ENCODE measurements at regions of chr16 and their contacts with region 1.

Region 1: GRCh38 chr16:88452482-88453216 is 431 bp upstream of the ZFPM1 start:
- DNase-seq: peak; percentile 99
- H3K4me3 Mint-ChIP-seq: peak overlapping the region; percentile 80
- H3K27ac Mint-ChIP-seq: peak overlapping the region; percentile 84
- H3K4me1 Mint-ChIP-seq: peaks cover 25% of the 10 kb centered on the region
- H3K27me3 Mint-ChIP-seq: no peaks in the 10 kb centered on the region

Region 2: DNA sequence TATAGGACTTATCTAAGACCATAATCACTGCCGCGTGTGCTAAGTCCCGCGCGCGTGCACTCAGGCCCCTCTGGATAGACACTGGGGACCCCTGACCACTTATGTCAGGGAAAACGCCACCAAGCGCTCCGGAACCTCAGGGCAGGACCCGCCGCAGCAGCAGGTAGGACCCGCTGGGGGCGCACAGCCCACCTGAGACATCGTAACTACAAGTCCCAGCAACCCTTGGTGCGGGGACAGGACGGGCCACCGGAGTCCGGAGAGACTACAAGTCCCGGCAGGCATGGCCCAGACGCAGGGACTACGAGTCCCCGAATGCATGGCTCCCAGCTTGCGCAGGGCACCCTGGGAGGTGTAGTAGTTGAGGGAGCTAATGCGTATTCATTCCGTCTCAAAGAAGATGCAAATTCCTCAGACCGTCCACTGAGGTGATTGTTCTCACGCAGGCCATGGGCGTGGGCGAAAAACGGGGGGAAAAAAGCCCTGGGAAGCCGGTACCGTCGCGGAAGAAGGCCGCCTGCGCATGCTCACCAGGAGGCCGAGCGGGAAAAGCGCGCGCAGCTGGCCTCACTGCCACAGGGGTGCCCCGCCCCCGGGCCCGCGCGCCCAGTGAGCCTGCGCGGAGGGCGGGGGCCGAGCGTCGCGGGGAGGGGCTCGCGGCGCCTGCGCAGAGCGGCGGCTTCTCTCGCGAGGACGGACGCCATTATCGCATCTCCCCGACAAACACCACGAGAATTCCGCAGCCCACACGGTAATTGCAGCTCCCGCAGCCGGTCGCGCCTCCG is 501.7 kb before region 1 on chr16 and contains the start of gene BANP:
- CTCF ChIA-PET with region 1: no interaction called
- POLR2A ChIA-PET with region 1: no interaction called
- intact Hi-C with region 1: loop called (anchors 5 kb)
- DNase-seq: peak; percentile 98
- H3K4me3 Mint-ChIP-seq: peak within 1 kb of the TSS; percentile 96
- H3K27ac Mint-ChIP-seq: peak within 1 kb of the TSS; percentile 100
- H3K4me1 Mint-ChIP-seq: peaks cover 43% of the 10 kb centered on the region
- H3K27me3 Mint-ChIP-seq: peaks cover 2% of the 10 kb centered on the region
- total RNA-seq, gene BANP: 29.6 to 30.6 TPM

Region 3: DNA sequence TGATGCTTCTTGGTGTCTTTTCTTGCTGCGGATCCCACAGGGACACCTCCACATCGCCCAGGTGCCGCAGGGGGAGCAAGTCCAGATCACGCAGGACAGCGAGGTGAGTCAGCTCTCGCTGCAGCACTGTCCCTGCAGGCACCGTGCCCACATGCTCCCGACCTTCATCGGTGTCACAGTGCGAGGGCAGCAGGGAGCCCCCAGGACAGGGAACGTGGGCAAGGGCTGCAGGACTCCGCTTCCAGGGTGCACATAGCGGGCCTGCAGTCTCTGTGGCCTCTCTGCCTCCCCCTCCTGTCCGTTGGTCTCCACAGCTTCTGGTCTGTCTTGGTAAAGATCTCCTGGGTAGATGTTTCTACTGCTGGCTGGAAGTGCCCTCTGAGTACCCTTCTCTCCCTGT is 417.4 kb before region 1 on chr16:
- CTCF ChIA-PET with region 1: no interaction called
- POLR2A ChIA-PET with region 1: no interaction called
- intact Hi-C with region 1: no loop called
- DNase-seq: no peak
- H3K4me3 Mint-ChIP-seq: no peak overlapping the region
- H3K27ac Mint-ChIP-seq: no peak overlapping the region
- H3K4me1 Mint-ChIP-seq: no peaks in the 10 kb centered on the region
- H3K27me3 Mint-ChIP-seq: no peaks in the 10 kb centered on the region

Region 4: DNA sequence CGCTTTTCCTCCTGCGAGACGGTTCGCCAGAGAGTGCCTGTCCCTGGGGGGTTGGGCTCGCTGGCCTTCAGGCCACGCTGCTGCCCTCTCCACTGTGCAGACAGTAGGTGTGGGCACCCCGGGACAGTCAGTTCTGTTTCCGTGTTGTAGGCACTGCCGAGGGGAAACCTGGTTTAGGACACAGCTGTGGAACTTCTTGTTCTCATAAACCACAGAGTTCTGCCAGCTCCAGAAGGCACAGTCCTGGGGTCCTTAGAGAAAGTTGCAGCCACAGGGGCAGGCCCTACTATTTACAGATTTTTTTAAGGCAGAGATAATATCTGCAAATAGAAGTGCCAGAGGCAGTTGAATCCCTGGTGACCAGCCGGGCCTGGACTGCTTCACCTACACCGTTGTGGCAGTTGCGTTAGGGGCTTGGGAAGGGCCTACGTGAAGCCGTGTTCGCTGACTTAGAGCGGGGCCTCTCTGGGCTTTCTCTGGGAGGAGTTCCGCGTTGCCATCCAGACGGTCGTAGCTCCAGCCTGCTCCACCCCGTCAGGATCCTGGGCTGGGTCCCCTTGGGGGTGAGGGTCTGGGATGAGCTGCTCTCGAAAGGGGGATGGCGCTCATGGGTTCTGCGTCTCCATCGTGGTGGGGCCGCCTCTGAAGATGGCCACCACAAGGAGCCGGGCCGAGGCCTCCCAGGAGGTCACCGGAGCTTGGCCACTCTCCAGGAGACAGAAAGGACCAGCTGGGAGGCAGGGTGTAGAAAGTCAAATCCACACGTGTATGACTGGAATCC is 375.1 kb before region 1 on chr16:
- CTCF ChIA-PET with region 1: no interaction called
- POLR2A ChIA-PET with region 1: no interaction called
- intact Hi-C with region 1: no loop called
- DNase-seq: no peak
- H3K4me3 Mint-ChIP-seq: no peak overlapping the region
- H3K27ac Mint-ChIP-seq: no peak overlapping the region
- H3K4me1 Mint-ChIP-seq: no peaks in the 10 kb centered on the region
- H3K27me3 Mint-ChIP-seq: no peaks in the 10 kb centered on the region

Region 5: DNA sequence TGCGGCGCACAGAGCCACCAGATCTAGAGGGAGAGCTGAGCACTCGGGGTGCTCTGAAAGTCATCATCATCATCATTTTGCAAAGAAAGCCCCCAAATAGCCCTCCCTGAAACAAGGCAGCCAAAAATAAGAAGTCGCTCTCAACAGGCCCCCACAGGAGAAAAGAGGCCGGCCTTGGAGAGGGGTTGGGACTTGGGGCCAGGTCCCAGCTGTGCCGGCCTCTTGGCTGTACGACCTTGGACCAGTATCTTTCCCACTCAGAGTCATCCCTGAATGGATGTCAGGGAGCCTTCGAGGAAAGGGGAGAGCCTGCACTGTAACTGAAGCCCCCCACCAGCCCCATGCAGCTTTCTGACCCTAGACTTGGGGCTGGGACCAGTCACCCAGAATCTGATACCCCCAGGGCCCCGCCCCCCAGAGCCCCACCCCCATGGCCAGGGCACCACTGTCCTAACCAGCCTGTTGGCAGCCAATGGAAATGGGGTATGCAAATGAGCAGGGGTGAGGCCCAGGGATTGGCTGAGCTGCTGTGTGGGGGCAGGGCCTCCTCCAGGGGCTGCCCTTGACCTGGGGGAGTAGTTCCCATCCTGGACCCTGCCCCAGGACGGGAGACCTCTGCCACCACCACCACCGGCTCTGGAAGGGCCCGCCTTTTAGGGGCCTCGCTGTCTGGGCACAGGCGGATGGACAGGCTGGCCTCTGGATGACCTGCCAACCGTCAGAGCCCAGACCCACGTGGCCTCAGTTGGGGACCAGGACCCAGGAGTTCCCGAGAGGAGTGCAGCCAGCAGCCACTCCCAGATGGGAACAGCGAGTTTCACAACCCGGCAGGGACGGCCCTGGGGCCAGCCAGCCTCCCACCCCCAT is 15.9 kb after region 1 on chr16:
- CTCF ChIA-PET with region 1: interaction called, 10 read pairs
- POLR2A ChIA-PET with region 1: interaction called, 3 read pairs
- intact Hi-C with region 1: loop called (anchors 2 kb)
- DNase-seq: peak; percentile 45
- H3K4me3 Mint-ChIP-seq: no peak overlapping the region
- H3K27ac Mint-ChIP-seq: no peak overlapping the region
- H3K4me1 Mint-ChIP-seq: peaks cover 72% of the 10 kb centered on the region
- H3K27me3 Mint-ChIP-seq: no peaks in the 10 kb centered on the region

Region 6: GRCh38 chr16:88527186-88527936 is 74.7 kb after region 1 on chr16:
- CTCF ChIA-PET with region 1: interaction called, 4 read pairs
- POLR2A ChIA-PET with region 1: no interaction called
- intact Hi-C with region 1: loop called (anchors 5 kb)
- DNase-seq: peak; percentile 71
- H3K4me3 Mint-ChIP-seq: no peak overlapping the region
- H3K27ac Mint-ChIP-seq: no peak overlapping the region
- H3K4me1 Mint-ChIP-seq: peaks cover 2% of the 10 kb centered on the region
- H3K27me3 Mint-ChIP-seq: no peaks in the 10 kb centered on the region

Region 7: GRCh38 chr16:88700636-88701482 is 248.2 kb after region 1 on chr16:
- CTCF ChIA-PET with region 1: no interaction called
- POLR2A ChIA-PET with region 1: no interaction called
- intact Hi-C with region 1: loop called (anchors 5 kb)
- DNase-seq: peak; percentile 98
- H3K4me3 Mint-ChIP-seq: peak overlapping the region; percentile 81
- H3K27ac Mint-ChIP-seq: peak overlapping the region; percentile 91
- H3K4me1 Mint-ChIP-seq: peaks cover 64% of the 10 kb centered on the region
- H3K27me3 Mint-ChIP-seq: no peaks in the 10 kb centered on the region